HEK293 (cell line): ENCODE measurements at regions of chrX and their contacts with region 1.

Region 1: DNA sequence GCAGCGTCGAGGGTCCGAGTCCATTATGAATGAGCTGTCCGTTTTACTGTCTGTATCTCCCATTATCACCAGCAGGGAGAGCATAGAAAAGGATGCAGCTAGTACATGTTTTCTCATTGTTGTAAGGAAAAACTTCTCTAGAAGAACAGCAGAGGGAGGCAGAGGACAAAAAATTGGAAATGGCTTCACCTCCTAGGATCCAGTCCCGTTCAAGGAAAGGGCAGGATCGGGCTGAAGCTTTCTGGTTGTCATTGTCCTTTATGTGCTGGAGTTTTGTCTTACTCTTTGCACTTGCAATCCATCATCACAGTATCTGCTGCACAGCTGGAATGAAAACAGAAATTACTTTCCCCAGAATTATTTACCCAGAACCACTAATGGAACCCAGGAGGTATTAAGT is 14.7 kb downstream of the NDP start:
- H3K4me3 ChIP-seq: no peak overlapping the region
- H3K27ac ChIP-seq: no peak overlapping the region
- H3K4me1 ChIP-seq: no peaks in the 10 kb centered on the region
- CTCF ChIP-seq: peak; percentile 61

Region 2: DNA sequence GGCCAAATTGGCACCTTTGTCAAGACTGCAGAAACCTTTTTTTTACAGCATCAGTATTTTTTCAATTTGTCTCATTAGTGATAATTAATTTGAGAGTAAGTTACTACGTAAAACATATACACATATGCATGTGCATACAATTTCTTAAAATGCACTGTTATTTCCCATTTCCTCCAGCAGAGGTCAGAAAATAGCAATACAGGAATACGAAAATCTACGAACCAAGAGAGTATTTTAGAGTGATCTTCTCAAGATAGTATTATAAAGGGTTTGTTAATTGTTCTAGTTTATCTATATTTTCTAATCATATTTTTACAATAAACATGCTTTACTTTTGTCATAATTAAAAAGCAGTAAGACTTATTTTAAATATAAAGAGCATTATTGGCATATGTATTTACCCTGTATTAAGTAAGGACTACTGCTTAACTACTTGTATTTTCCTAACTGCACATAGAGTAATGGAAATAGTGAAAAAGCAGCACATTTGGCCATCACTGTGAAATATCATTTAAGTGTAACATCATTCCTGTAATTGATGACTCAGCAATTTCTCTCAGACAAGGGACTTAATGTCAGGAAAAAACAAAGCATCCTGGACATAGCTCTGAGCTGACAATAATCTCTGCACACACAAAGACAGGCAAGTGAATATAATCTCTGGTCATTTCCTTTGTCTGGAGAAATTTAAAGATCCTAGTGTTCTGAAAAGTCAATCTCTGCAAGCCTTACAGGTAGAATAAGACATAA is 121.9 kb before region 1 on chrX:
- CTCF ChIA-PET with region 1: interaction called, 17 read pairs
- POLR2A ChIA-PET with region 1: no interaction called
- H3K4me3 ChIP-seq: no peak overlapping the region
- H3K27ac ChIP-seq: no peak overlapping the region
- H3K4me1 ChIP-seq: no peaks in the 10 kb centered on the region
- CTCF ChIP-seq: no peak

Region 3: DNA sequence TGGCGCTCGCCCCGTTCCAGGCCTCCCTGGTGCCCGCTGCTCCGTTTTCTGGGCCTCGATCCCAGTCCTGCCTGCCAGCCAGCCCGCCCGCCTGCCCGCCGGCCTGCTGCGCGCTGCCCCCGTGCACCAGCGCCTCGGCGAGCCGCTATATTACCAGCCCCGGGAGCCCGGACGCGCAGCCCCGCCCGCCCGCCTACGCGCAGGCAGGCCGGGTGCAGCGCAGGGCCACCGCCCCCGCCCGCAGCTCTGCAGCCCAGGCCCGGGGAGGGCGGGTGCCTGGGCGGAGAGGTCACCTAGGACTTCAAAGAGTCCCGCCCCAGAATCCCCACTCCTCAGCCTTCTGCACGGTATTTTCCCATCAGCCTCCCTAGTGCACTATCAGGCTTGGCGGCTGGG is 76.2 kb before region 1 on chrX and contains the start of gene MAOB:
- CTCF ChIA-PET with region 1: no interaction called
- POLR2A ChIA-PET with region 1: no interaction called
- H3K4me3 ChIP-seq: peak within 1 kb of the TSS; percentile 24
- H3K27ac ChIP-seq: no peak within 1 kb of the TSS
- H3K4me1 ChIP-seq: no peaks in the 10 kb centered on the region
- CTCF ChIP-seq: no peak

Region 4: DNA sequence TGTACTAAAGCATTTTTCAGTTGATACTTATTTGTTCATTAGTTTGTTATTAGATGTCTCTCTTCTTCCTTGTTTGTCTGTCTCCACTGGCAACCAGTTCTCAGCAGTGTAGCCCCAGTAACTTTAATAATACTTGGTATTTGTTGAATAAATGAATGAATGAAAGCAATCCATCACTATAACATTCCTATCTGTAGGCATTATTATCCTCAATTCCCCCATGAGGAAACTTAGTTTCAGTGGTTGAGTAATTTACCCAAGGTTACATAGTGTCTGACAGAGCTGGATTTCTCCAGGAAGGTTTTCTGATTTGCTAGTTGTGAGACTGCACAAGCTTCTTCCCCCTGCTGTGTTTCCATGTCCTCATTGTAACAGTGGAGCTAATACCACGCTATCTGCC is 48.5 kb before region 1 on chrX:
- CTCF ChIA-PET with region 1: no interaction called
- POLR2A ChIA-PET with region 1: no interaction called
- H3K4me3 ChIP-seq: no peak overlapping the region
- H3K27ac ChIP-seq: no peak overlapping the region
- H3K4me1 ChIP-seq: peaks cover 3% of the 10 kb centered on the region; the same call in 1 of the 2 replicates
- CTCF ChIP-seq: no peak

Region 5: DNA sequence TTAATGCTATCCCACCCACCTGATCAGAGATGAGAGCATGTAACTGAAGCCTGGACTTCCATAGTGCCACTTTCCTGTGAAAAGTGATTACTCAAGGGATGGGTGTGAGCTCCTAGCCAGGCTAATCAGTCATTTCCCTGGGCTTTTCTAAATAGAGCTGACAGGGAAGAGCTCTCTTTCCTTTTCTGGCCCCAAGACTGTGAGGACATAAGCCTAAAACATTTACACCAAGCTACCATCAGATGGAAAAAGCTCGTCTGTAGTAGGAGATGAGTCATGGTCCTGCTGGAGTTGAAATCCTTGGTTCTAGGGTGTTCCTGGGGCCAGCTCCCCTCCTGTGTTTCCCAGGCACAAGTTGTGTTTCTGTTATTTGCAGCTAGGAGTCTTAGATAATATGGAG is 67.0 kb after region 1 on chrX:
- CTCF ChIA-PET with region 1: interaction called, 11 read pairs
- POLR2A ChIA-PET with region 1: no interaction called
- H3K4me3 ChIP-seq: no peak overlapping the region
- H3K27ac ChIP-seq: no peak overlapping the region
- H3K4me1 ChIP-seq: no peaks in the 10 kb centered on the region
- CTCF ChIP-seq: no peak

Region 6: DNA sequence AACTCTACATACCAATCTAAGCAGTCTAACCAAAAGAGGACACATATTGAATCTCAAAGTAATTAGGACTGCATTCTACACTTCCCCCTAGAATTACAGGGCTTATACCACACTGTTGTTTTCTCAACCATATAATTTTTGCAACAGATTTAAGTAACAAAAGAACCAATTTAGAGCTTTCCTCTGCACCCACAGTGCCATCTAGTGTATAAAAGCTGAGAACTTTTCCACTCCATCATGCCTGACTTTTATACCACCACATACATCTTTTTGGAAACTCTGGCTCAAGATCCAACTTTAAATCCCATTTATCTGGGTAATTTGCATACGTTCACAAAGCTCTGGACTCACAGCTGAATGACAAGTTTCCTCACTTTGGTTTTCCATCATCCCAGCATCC is 285.5 kb after region 1 on chrX:
- CTCF ChIA-PET with region 1: interaction called, 54 read pairs
- POLR2A ChIA-PET with region 1: interaction called, 5 read pairs
- H3K4me3 ChIP-seq: no peak overlapping the region
- H3K27ac ChIP-seq: no peak overlapping the region
- H3K4me1 ChIP-seq: no peaks in the 10 kb centered on the region
- CTCF ChIP-seq: no peak

Region 7: GRCh38 chrX:44291468-44292113 is 333.1 kb after region 1 on chrX:
- CTCF ChIA-PET with region 1: no interaction called
- POLR2A ChIA-PET with region 1: no interaction called
- H3K4me3 ChIP-seq: no peak overlapping the region
- H3K27ac ChIP-seq: no peak overlapping the region
- H3K4me1 ChIP-seq: no peaks in the 10 kb centered on the region
- CTCF ChIP-seq: no peak

Region 8: DNA sequence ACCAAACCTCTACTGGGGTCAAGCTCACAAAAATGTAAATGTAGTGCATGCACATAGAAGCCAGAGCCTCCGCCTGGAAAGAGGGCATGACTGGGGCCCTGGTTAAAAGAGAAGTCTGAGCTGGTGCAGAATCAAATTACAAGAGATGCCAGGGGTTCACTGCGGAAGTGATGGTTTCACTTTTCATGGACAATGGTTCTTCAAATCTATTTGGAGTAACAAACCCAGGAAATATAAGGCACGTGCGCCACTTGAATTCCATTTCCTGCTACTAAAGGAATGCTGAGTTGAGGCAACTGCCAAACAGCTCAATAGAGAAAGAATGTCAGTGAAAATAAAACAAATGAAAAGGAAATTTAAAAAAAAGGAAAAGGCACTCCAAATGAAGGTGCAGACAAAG is 504.3 kb after region 1 on chrX:
- CTCF ChIA-PET with region 1: no interaction called
- POLR2A ChIA-PET with region 1: no interaction called
- H3K4me3 ChIP-seq: no peak overlapping the region
- H3K27ac ChIP-seq: no peak overlapping the region
- H3K4me1 ChIP-seq: no peaks in the 10 kb centered on the region
- CTCF ChIP-seq: no peak

Region 9: GRCh38 chrX:44872817-44873414 is 914.4 kb after region 1 on chrX and contains the start of gene KDM6A:
- CTCF ChIA-PET with region 1: no interaction called
- POLR2A ChIA-PET with region 1: interaction called, 10 read pairs
- H3K4me3 ChIP-seq: peak within 1 kb of the TSS; percentile 94
- H3K27ac ChIP-seq: peak within 1 kb of the TSS; percentile 99
- H3K4me1 ChIP-seq: no peaks in the 10 kb centered on the region
- CTCF ChIP-seq: no peak